Activated naive CD4-positive, alpha-beta T cell treated with anti-CD3 and anti-CD28 coated beads, Interleukin-2, amount 10 ng/mL, durations not matched to agents 7 days and 5 days (primary cell): ENCODE measurements at regions of chr21 and their contacts with region 1.

Region 1: DNA sequence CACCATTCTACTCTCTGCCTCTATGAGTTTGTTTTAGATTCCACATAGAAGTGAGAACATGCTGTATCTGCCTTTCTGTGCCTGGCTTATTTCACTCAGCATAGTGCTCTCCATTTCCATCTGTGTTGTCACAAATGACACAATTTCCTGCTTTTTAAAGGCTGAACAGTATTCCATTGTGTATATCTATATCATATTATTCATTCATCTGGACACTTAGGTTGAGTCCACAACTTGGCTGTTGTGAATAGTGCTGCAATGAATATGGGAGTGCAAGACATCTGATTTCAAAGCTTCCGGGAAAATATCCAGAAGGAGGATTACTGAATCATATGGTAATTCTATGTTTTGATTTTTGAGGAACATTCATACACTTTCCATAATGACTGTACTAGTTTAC is 20.1 kb upstream of the DONSON start:
- DNase-seq: no peak
- H3K4me3 Mint-ChIP-seq: no peak overlapping the region
- H3K27ac Mint-ChIP-seq: no peak overlapping the region
- H3K4me1 Mint-ChIP-seq: no peaks in the 10 kb centered on the region
- H3K27me3 Mint-ChIP-seq: no peaks in the 10 kb centered on the region

Region 2: GRCh38 chr21:33444499-33444898 is 164.1 kb before region 1 on chr21:
- CTCF ChIA-PET with region 1: interaction called, 11 read pairs
- DNase-seq: no peak
- H3K4me3 Mint-ChIP-seq: no peak overlapping the region
- H3K27ac Mint-ChIP-seq: no peak overlapping the region
- H3K4me1 Mint-ChIP-seq: peaks cover 8% of the 10 kb centered on the region
- H3K27me3 Mint-ChIP-seq: no peaks in the 10 kb centered on the region

Region 3: GRCh38 chr21:33588485-33589335 is 19.8 kb before region 1 on chr21 and contains the start of gene DONSON:
- CTCF ChIA-PET with region 1: interaction called, 24 read pairs
- DNase-seq: peak; percentile 89
- H3K4me3 Mint-ChIP-seq: peak within 1 kb of the TSS; percentile 92
- H3K27ac Mint-ChIP-seq: peak within 1 kb of the TSS; percentile 89
- H3K4me1 Mint-ChIP-seq: peaks cover 34% of the 10 kb centered on the region
- H3K27me3 Mint-ChIP-seq: no peaks in the 10 kb centered on the region

Region 4: DNA sequence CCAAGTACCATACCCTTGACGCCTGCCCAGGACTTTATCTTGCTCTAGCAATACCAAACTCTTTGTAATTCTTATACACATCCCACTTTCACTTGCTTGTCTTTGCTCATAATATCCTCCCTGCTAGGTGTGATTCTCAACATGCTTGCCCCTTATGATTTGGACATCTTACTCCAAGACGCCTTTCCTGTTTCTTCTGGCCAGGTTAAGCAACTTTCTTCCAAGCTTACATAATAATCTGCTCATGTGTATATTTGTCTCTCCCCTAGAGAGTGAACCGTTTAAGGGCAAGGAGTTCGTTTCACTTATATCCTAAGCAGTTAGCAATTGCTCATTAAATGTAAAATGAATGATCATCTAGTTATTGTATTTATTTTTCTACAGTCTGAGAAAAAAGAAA is 11.2 kb after region 1 on chr21:
- CTCF ChIA-PET with region 1: interaction called, 11 read pairs
- DNase-seq: no peak
- H3K4me3 Mint-ChIP-seq: no peak overlapping the region
- H3K27ac Mint-ChIP-seq: no peak overlapping the region
- H3K4me1 Mint-ChIP-seq: no peaks in the 10 kb centered on the region
- H3K27me3 Mint-ChIP-seq: no peaks in the 10 kb centered on the region